Activated CD4-positive, alpha-beta memory T cell treated with anti-CD3 and anti-CD28 coated beads, Interleukin-2, amount 10 ng/mL, durations not matched to agents 7 days and 5 days (primary cell): ENCODE measurements at regions of chr3 and their contacts with region 1.

Region 1: GRCh38 chr3:49539659-49540560 is 14.4 kb upstream of the BSN start:
- DNase-seq: peak; percentile 92
- H3K4me3 Mint-ChIP-seq: peak overlapping the region; percentile 66
- H3K27ac Mint-ChIP-seq: no peak overlapping the region
- H3K4me1 Mint-ChIP-seq: peaks cover 7% of the 10 kb centered on the region
- H3K27me3 Mint-ChIP-seq: peaks cover 16% of the 10 kb centered on the region

Region 2: GRCh38 chr3:49397470-49397869 is 142.4 kb before region 1 on chr3:
- CTCF ChIA-PET with region 1: no interaction called
- POLR2A ChIA-PET with region 1: no interaction called
- DNase-seq: no peak
- H3K4me3 Mint-ChIP-seq: no peak overlapping the region
- H3K27ac Mint-ChIP-seq: no peak overlapping the region
- H3K4me1 Mint-ChIP-seq: peaks cover 47% of the 10 kb centered on the region
- H3K27me3 Mint-ChIP-seq: no peaks in the 10 kb centered on the region

Region 3: DNA sequence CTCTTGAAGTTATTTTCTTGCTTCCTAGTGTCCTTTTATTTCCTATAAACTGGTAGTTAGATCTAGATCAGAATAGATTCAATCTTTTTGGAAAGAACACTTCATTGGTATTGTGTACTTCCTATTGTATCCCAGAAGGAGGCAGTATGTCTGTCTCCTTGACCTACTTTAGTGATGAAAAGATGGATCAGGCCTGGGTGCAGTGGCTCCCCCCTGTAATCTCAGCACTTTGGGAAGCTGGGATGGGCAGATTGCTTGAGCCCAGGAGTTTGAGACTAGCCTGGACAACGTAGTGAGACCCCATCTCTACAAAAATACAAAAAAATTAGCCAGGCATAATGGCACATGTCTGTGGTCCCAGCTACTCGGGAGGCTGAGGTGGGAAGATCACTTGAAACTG is 26.4 kb after region 1 on chr3:
- CTCF ChIA-PET with region 1: interaction called, 25 read pairs
- POLR2A ChIA-PET with region 1: no interaction called
- DNase-seq: no peak
- H3K4me3 Mint-ChIP-seq: no peak overlapping the region
- H3K27ac Mint-ChIP-seq: no peak overlapping the region
- H3K4me1 Mint-ChIP-seq: no peaks in the 10 kb centered on the region
- H3K27me3 Mint-ChIP-seq: peaks cover 17% of the 10 kb centered on the region

Region 4: GRCh38 chr3:49668861-49669260 is 129.0 kb after region 1 on chr3:
- CTCF ChIA-PET with region 1: interaction called, 247 read pairs
- POLR2A ChIA-PET with region 1: interaction called, 43 read pairs
- DNase-seq: no peak
- H3K4me3 Mint-ChIP-seq: no peak overlapping the region
- H3K27ac Mint-ChIP-seq: no peak overlapping the region
- H3K4me1 Mint-ChIP-seq: peaks cover 17% of the 10 kb centered on the region
- H3K27me3 Mint-ChIP-seq: no peaks in the 10 kb centered on the region

Region 5: GRCh38 chr3:49703443-49703927 is 163.6 kb after region 1 on chr3:
- CTCF ChIA-PET with region 1: interaction called, 21 read pairs
- POLR2A ChIA-PET with region 1: no interaction called
- DNase-seq: peak; percentile 73
- H3K4me3 Mint-ChIP-seq: no peak overlapping the region
- H3K27ac Mint-ChIP-seq: no peak overlapping the region
- H3K4me1 Mint-ChIP-seq: no peaks in the 10 kb centered on the region
- H3K27me3 Mint-ChIP-seq: no peaks in the 10 kb centered on the region

Region 6: DNA sequence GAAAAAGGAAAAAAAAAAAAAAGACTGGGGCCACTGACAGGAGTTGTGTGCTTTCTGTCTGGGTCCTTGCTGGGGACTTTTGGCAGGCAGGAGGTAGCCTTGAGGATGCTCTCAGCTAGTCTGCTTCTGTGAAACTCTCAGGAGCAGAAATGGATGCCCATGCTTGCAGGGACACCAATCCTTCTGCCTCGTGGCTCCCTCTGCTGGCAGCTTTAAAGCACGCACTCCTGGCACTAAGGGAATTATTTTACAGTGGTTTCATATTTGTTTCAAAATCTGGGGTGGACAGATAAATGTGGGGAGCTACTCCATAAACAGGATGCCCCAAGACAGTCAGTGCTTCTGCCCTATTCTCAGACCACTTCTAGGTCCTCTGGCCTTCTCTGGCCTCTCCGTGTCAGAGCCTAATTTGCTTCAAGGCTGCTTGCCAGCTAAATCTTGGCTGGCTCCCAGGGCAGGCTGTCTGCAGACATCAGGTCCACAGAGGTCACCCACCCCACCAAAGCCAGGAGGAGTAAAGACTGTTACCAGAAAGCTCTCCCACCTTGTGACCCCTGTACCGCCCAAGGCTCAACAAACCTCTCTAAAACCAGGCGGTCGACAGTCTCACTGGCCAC is 299.4 kb after region 1 on chr3:
- CTCF ChIA-PET with region 1: interaction called, 24 read pairs
- POLR2A ChIA-PET with region 1: no interaction called
- DNase-seq: peak; percentile 81
- H3K4me3 Mint-ChIP-seq: no peak overlapping the region
- H3K27ac Mint-ChIP-seq: no peak overlapping the region
- H3K4me1 Mint-ChIP-seq: peaks cover 1% of the 10 kb centered on the region
- H3K27me3 Mint-ChIP-seq: no peaks in the 10 kb centered on the region

Region 7: GRCh38 chr3:49942651-49943050 is 402.7 kb after region 1 on chr3:
- CTCF ChIA-PET with region 1: no interaction called
- POLR2A ChIA-PET with region 1: no interaction called
- DNase-seq: no peak
- H3K4me3 Mint-ChIP-seq: no peak overlapping the region
- H3K27ac Mint-ChIP-seq: peak overlapping the region; percentile 21
- H3K4me1 Mint-ChIP-seq: peaks cover 37% of the 10 kb centered on the region
- H3K27me3 Mint-ChIP-seq: no peaks in the 10 kb centered on the region